ENCODE measurements at regions of chr2 and their contacts with region 1.

Region 1: DNA sequence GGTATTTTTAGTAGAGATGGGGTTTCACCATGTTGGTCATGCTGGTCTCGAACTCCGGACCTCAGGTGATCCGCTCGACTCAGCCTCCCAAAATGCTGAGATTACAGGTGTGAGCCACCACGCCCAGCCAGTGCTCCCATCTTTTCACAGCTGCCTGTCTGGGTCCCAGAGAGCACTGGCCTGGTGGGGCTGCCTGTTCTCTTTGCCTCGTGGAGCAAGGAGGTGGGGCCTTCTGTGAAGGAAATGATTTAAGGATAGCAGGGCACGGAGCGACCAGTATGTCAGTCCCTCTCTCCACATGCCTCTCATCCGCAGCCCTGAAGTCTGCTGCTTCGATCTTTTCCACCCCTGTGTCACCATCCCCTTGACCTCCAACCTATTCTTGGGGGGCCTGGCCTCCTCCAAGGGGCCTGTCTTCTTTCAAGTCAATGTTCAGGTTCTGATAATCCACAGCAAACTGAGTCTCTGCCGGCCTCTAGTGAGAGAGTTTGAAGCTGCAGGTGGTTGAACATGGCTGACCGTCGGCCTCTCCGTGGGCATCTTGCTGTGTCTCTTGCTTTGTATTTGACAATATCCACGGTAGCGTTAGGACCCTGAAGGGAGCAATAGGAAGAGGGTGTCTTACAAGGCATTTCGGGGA is 28.2 kb upstream of the GIGYF2 start:
- DNase-seq: no peak

Region 2: DNA sequence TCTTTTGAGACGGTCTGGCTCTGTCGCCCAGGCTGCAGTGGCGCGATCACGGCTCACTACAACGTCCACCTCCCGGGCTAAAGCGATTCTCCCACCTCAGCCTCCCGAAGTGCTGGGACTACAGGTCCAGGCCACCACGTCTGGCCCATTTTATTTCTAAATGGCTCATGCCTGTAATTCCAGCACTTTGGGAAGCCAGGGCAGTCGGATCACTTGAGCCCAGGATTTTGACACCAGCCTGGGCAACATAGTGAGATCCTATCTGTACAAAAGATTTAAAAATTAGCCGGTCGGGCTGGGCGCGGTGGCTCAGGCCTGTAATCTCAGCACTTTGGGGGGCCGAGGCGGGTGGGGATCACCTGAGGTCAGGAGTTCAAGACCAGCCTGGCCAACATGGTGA is 61.9 kb before region 1 on chr2:
- intact Hi-C with region 1: loop called (anchors 2 kb)
- DNase-seq: no peak